ENCODE measurements at regions of chr1 and their contacts with region 1.

Region 1: DNA sequence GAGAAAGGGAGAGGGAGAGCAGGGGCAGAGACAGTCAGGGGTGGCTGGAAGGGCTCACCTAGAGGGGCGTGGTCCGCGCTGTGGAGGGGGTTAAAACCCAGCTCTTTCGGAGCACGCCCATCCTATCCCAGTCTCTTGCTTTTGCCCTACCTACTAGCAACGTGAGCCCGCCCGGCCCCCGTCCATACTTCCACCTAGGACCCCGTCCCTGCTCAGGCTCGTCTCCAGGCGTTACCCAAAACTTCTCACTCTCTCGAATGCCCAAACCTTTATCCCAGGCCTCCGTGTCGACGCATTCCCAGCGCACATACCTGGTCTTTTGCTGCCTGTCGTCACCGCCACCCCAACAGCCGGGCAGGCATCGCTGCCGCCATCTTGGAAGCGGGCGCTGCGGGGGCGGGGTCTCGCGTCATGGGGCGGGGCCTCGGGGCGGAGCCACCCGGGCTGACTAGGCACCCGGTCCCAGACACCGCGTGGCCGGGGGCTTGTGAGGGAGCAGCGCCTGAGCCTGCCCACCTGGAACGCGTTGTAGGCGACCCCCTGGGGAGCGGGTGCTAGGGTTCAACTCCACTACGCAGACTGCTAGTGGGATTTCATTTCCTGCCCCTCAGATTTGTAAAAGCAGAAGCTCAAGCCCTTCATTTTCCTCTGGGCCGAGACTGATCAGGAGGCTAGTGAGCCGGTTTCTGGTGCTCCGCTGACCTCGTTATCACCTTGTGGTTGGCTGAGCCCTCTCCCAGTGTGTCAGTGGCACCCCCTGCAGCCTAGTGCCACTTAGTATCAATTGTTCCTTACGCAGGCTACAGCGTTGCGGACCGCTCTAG is at the start of gene B4GALT3:
- DNase-seq: peak; percentile 92
- ATAC-seq: peak; percentile 92
- H3K4me3 ChIP-seq: peak within 1 kb of the TSS; percentile 75 to 95 (median 90)
- H3K4me3 Mint-ChIP-seq: peak within 1 kb of the TSS; percentile 99
- H3K27ac ChIP-seq: peak within 1 kb of the TSS; percentile 76 to 81
- H3K27ac Mint-ChIP-seq: peak within 1 kb of the TSS; percentile 100
- H3K4me1 ChIP-seq: peaks cover 36 to 52% of the 10 kb centered on the region in 2 donors
- H3K4me1 Mint-ChIP-seq: peaks cover 64% of the 10 kb centered on the region
- H3K27me3 ChIP-seq: no peaks in the 10 kb centered on the region
- H3K27me3 Mint-ChIP-seq: no peaks in the 10 kb centered on the region
- CTCF ChIP-seq: no peak
- total RNA-seq, gene B4GALT3: 37.6 and 42.9 TPM in 2 replicates

Region 2: GRCh38 chr1:161159087-161159912 is 18.0 kb before region 1 on chr1 and contains the start of gene USP21:
- CTCF ChIA-PET with region 1: interaction called, 19 read pairs
- POLR2A ChIA-PET with region 1: interaction called, 7 read pairs
- intact Hi-C with region 1: loop called (anchors 1 kb)
- DNase-seq: peak; percentile 94
- ATAC-seq: peak; percentile 96
- H3K4me3 ChIP-seq: peak within 1 kb of the TSS; percentile 69 to 92 (median 85)
- H3K4me3 Mint-ChIP-seq: peak within 1 kb of the TSS; percentile 92
- H3K27ac ChIP-seq: peak within 1 kb of the TSS; percentile 74 to 76
- H3K27ac Mint-ChIP-seq: peak within 1 kb of the TSS; percentile 93
- H3K4me1 ChIP-seq: peaks cover 31 to 33% of the 10 kb centered on the region in 2 donors
- H3K4me1 Mint-ChIP-seq: peaks cover 55% of the 10 kb centered on the region
- H3K27me3 ChIP-seq: no peaks in the 10 kb centered on the region
- H3K27me3 Mint-ChIP-seq: no peaks in the 10 kb centered on the region
- CTCF ChIP-seq: no peak
- total RNA-seq, gene USP21: 50.2 and 53.3 TPM in 2 replicates